Spleen (tissue), 13 donors: ENCODE measurements at regions of chr1 and their contacts with region 1.

Region 1: DNA sequence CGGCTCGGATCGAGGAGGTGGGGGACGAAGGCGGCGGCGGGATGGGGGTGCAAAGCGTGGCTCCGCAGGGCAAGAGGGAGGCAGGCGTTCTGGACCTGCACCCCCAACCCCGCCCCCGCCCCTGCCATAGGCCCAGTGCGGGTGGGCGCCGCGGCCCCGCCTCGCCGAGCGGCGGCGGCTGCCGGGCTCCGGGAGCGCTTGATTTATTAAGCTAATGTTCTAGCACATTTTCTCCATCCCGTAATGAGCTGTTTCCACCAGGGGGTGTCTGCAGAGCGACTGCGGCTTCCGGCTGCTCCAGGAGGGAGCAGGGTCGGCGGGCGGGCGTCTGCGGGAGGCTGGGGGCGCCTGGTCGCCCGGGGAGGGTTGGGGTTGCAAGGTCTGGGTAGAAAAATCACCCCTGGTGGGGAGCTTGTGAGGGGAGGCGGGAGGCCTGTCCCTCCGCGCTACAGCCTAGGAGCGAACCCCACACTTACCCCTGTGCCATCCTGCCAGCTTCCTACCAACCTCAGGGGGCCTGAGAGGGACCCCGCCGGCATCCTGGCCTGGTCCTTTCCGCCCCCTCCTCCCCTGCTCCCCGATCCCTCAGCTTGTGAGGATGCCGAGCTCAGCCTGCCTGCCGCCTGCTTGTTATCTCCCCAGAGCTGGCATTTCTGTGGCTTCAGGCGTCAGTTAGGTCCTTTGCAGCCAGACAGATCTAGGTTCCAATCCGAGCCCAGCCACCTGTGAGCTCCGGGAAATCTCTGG is 48.5 kb upstream of the ACOT11 start:
- DNase-seq: no peak
- H3K4me3 ChIP-seq: peak overlapping the region; percentile 13 to 64 (median 26)
- H3K27ac ChIP-seq: no peak overlapping the region
- H3K4me1 ChIP-seq: peaks cover 5 to 18% (median 16%) of the 10 kb centered on the region in 6 donors
- H3K27me3 ChIP-seq: peaks cover 0 to 83% (median 25%) of the 10 kb centered on the region in 7 donors
- CTCF ChIP-seq: peak in 7 of 11 experiments; percentile 9 to 44 (median 26)
- POLR2A ChIP-seq: no peak

Region 2: GRCh38 chr1:54604572-54605370 is 105.2 kb after region 1 on chr1:
- intact Hi-C with region 1: no loop called
- DNase-seq: peak; percentile 77
- H3K4me3 ChIP-seq: no peak overlapping the region
- H3K27ac ChIP-seq: no peak overlapping the region
- H3K4me1 ChIP-seq: peaks cover 0 to 11% (median 2%) of the 10 kb centered on the region in 6 donors
- H3K27me3 ChIP-seq: no peaks in the 10 kb centered on the region
- CTCF ChIP-seq: no peak
- POLR2A ChIP-seq: no peak

Region 3: DNA sequence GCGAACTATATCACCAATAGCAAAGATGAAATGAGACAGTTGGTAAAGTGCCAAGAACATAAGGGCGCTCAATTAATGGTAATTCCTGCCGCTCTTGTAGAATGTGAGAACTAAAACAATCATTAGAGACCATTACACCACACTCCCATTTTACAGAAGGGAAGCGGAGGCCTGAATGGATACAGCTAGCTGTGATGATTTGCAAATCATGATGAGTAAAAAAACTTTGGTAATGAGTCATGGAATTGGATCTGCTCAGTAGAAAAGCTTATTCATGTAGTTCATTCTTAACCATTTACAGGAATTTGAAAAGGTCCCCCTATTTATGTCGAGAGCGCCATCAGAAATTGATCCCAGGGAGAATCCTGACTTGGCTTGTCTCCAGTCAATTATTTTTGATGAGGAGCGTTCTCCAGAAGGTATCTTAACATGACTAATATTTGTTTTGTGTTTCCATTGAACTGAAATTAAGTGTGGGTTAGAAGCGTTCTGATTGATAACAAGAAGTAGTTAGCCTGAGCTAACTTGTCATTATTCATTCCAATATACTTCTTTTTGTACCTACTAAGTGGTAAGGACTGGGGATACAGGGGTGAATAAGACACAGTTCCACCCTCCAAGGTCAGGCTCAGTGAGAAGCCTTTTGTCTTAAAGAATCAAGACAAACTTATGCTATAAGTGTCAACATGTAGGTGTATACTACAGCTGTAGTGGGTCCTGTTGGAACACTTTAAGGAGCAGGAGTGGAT is 216.9 kb after region 1 on chr1:
- intact Hi-C with region 1: no loop called
- DNase-seq: no peak
- H3K4me3 ChIP-seq: peak overlapping the region; percentile 74 to 96 (median 86)
- H3K27ac ChIP-seq: peak overlapping the region in 4 of 8 donors; percentile 71 to 88 (median 84)
- H3K4me1 ChIP-seq: peaks cover 9 to 39% (median 29%) of the 10 kb centered on the region in 6 donors
- H3K27me3 ChIP-seq: no peaks in the 10 kb centered on the region
- CTCF ChIP-seq: no peak
- POLR2A ChIP-seq: no peak

Region 4: DNA sequence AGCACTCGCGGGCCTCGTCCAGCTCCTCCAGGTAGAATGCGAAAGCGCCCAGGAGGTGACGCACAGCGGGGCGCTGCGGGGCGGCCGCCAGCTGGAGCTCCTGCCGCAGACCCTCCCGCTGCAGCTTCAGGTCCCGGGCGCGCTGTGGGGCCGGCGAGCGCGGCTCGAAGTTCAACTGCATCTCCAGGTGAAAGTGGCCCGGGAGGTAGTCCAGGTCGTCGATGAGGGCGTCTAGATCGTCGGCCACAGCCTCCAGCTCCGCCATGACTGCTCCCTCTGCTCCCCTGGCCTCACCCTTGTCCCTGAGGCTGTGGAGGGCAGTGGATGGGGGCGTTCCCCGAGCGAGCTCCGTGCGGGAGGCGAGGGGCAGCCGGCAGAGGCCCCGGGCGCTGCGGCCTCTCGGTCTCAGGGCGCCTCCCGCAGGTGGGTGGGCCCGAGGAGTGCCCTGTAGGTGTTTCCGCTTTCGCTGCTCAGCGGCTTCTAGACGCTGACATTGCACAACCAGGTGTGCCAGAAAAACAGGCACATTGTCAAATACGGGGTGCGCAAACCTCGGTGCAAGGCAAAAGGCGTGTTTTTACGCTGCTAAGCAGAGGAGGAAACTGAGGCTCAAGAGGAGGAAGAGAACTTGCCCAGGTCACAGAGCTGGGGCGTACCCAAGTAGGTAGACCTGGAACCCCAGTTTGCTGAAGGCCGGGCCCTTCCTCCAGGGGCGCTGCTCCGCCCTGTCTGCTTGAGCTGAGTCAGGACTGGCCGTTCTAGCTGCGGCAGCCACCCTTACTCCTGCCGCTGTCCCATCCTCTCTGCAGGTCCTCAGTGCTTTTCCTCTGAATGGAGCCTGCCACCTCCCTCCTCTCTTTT is 301.6 kb after region 1 on chr1 and contains the start of gene TTC22:
- intact Hi-C with region 1: loop called (anchors 10 kb)
- DNase-seq: peak; percentile 94
- H3K4me3 ChIP-seq: peak within 1 kb of the TSS; percentile 41 to 85 (median 58)
- H3K27ac ChIP-seq: peak within 1 kb of the TSS; percentile 32 to 87 (median 72)
- H3K4me1 ChIP-seq: peaks cover 9 to 58% (median 39%) of the 10 kb centered on the region in 6 donors
- H3K27me3 ChIP-seq: peaks cover 0 to 22% (median 15%) of the 10 kb centered on the region in 7 donors
- CTCF ChIP-seq: peak; percentile 25 to 77 (median 61)
- POLR2A ChIP-seq: no peak
- total RNA-seq, gene TTC22: 2.7 to 6.4 (median 3.7) TPM